GM12878 (cell line): ENCODE measurements at regions of chr10 and their contacts with region 1.

Region 1: GRCh38 chr10:110076559-110077318 is 69.0 kb downstream of the ADD3 start:
- DNase-seq: peak; percentile 76
- ATAC-seq: peak; percentile 83
- H3K4me3 ChIP-seq: peak overlapping the region; percentile 43
- H3K27ac ChIP-seq: peak overlapping the region; percentile 87
- H3K4me1 ChIP-seq: peaks cover 34% of the 10 kb centered on the region
- H3K27me3 ChIP-seq: no peaks in the 10 kb centered on the region
- CTCF ChIP-seq: no peak
- EP300 ChIP-seq: peak; percentile 26 to 46; a peak in 1 of 4 replicates
- POLR2A ChIP-seq: no peak
- RAD21 ChIP-seq: peak; percentile 11; the same call in 1 of the 2 replicates

Region 2: DNA sequence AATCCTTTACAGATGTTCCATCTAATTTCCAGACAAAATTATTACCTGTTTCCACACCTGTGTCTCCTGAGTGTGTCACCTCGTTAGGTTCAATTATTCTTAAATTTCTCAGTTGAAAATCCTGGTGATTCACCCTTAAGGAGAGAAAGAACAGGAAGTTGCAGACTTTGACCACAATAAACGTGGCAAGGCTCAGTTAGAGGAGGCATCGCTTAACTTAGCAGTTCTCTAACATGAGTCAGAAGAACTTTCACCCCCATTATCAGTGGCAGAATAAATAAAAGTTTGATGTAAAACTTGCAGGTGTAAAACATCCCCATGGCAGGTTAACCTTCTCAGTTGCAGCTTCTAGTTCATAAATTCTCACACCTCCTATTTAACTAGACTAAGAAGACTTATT is 161.8 kb before region 1 on chr10:
- CTCF ChIA-PET with region 1: interaction called, 3 read pairs
- POLR2A ChIA-PET with region 1: no interaction called
- RAD21 ChIA-PET with region 1: no interaction called
- SMC1A ChIA-PET with region 1: interaction called, 3 read pairs
- in situ Hi-C with region 1: no loop called
- intact Hi-C with region 1: loop called (anchors 5 kb)
- DNase-seq: peak; percentile 41
- ATAC-seq: peak; percentile 18; the same call in 2 of the 3 replicates
- H3K4me3 ChIP-seq: no peak overlapping the region
- H3K27ac ChIP-seq: peak overlapping the region; percentile 25; the same call in 1 of the 2 replicates
- H3K4me1 ChIP-seq: peaks cover 61% of the 10 kb centered on the region
- H3K27me3 ChIP-seq: no peaks in the 10 kb centered on the region
- CTCF ChIP-seq: no peak
- EP300 ChIP-seq: no peak
- POLR2A ChIP-seq: no peak
- RAD21 ChIP-seq: no peak

Region 3: DNA sequence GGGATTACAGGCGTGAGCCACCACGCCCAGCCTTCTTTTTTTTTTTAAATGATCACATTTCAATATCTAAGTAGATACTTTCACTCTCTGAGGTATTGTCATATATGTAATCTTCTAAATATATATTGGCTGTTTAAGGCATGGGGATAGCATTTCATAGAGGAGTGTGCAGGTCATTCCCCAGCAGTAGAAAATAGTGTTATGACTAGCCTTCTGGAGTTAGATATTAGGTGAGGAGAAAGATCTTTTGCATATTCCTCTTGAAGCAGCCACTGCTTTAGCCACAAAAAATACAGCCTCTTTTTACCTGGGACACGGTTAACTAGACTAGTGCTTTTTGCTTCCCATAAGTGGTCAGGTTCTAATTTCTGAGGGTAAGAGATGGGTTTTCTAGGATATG is 40.1 kb before region 1 on chr10:
- CTCF ChIA-PET with region 1: interaction called, 13 read pairs
- POLR2A ChIA-PET with region 1: interaction called, 3 read pairs
- RAD21 ChIA-PET with region 1: interaction called, 6 read pairs
- SMC1A ChIA-PET with region 1: interaction called, 12 read pairs
- in situ Hi-C with region 1: no loop called
- intact Hi-C with region 1: no loop called
- DNase-seq: peak; percentile 48
- ATAC-seq: peak; percentile 78
- H3K4me3 ChIP-seq: peak overlapping the region; percentile 20
- H3K27ac ChIP-seq: peak overlapping the region; percentile 42; the same call in 1 of the 2 replicates
- H3K4me1 ChIP-seq: peaks cover 16% of the 10 kb centered on the region
- H3K27me3 ChIP-seq: no peaks in the 10 kb centered on the region
- CTCF ChIP-seq: no peak
- EP300 ChIP-seq: 0 out of 4 replicates have a peak, but pooled peaks of 1 of the 2 experiments have one; percentile 17
- POLR2A ChIP-seq: no peak
- RAD21 ChIP-seq: no peak

Region 4: DNA sequence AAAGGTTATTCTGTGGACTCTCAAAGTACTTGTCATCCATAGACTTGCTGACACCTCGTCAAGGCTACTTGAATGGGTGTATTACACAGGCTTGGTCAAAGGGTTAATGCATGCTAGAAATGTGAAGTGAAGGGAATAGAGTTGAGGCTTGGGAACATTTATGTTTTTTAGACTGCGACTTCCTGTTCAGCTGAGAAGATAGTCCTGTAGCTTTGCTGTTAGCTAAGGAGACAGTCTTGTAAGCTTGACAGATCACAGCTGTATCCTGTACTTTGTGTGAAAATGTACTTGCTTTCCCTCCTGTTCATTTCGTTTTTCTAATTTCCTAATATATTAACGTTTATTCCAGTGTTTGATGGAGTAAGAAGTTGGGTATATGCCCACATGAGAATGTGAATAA is 16.8 kb before region 1 on chr10:
- CTCF ChIA-PET with region 1: interaction called, 5 read pairs
- POLR2A ChIA-PET with region 1: interaction called, 7 read pairs
- RAD21 ChIA-PET with region 1: interaction called, 5 read pairs
- SMC1A ChIA-PET with region 1: interaction called, 67 read pairs
- in situ Hi-C with region 1: no loop called
- intact Hi-C with region 1: no loop called
- DNase-seq: no peak
- ATAC-seq: peak; percentile 31; the same call in 1 of the 3 replicates
- H3K4me3 ChIP-seq: no peak overlapping the region
- H3K27ac ChIP-seq: no peak overlapping the region; the same call in 1 of the 2 replicates
- H3K4me1 ChIP-seq: peaks cover 24% of the 10 kb centered on the region
- H3K27me3 ChIP-seq: no peaks in the 10 kb centered on the region
- CTCF ChIP-seq: no peak
- EP300 ChIP-seq: no peak
- POLR2A ChIP-seq: no peak
- RAD21 ChIP-seq: no peak

Region 5: DNA sequence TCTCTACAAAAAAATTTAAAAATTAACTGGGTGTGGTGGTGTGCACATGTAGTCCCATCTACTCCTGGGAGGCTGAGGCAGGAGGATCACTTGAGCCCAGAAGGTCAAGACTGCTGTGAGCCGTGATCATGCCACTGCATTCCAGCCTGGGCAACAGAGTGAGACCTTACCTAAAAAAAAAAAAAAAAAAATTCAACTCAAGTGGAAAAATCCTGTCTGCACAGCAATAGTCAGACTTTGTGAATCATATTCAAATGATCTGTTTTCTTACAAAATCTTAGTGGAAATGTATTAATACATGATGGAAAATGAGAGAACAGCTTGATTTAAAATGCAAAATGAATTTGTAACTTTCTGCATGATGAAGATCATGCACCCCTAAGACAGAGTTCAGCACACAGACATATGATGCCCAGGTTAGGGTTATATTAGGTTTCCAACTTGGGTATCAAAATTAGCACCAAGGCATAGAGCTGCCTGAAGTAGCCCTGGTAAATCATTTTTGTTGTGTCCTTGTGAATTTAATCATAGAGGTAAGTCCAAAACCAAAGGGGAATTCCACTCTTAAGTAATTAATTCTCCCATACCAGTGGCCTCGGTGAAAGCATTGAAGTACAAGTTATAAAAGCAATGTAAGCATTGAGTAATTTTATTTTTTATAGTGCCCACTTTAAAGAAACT is 24.9 kb after region 1 on chr10:
- CTCF ChIA-PET with region 1: interaction called, 3 read pairs
- POLR2A ChIA-PET with region 1: no interaction called
- RAD21 ChIA-PET with region 1: interaction called, 3 read pairs
- SMC1A ChIA-PET with region 1: interaction called, 11 read pairs
- in situ Hi-C with region 1: no loop called
- intact Hi-C with region 1: no loop called
- DNase-seq: no peak
- ATAC-seq: peak; percentile 82
- H3K4me3 ChIP-seq: no peak overlapping the region
- H3K27ac ChIP-seq: no peak overlapping the region
- H3K4me1 ChIP-seq: peaks cover 3% of the 10 kb centered on the region
- H3K27me3 ChIP-seq: no peaks in the 10 kb centered on the region
- CTCF ChIP-seq: no peak
- EP300 ChIP-seq: no peak
- POLR2A ChIP-seq: no peak
- RAD21 ChIP-seq: no peak

Region 6: DNA sequence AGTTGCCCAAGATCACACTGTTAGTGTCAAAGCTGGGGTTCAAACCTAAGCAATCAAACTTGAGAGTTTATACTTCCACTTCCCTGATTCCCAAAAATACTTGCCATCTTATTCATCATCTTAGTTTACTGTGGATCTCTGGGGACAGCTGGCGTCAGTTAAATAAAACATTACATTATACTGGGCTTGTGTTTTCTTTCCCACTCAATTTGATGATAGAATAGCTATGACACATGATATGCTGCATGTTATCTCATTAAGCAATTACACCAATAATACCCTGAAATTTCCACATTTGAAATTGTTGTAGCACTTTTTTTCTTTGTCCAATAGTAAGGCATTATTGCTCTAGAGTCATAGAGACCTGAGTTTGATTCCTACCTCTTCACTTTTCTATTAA is 67.8 kb after region 1 on chr10:
- CTCF ChIA-PET with region 1: no interaction called
- POLR2A ChIA-PET with region 1: no interaction called
- RAD21 ChIA-PET with region 1: no interaction called
- SMC1A ChIA-PET with region 1: no interaction called
- in situ Hi-C with region 1: no loop called
- intact Hi-C with region 1: no loop called
- DNase-seq: no peak
- ATAC-seq: no peak
- H3K4me3 ChIP-seq: no peak overlapping the region
- H3K27ac ChIP-seq: no peak overlapping the region
- H3K4me1 ChIP-seq: no peaks in the 10 kb centered on the region
- H3K27me3 ChIP-seq: peaks cover 0 to 1% of the 10 kb centered on the region in 2 experiments; a peak in 3 of 4 replicates
- CTCF ChIP-seq: no peak
- EP300 ChIP-seq: no peak
- POLR2A ChIP-seq: no peak
- RAD21 ChIP-seq: no peak

Region 7: GRCh38 chr10:110802551-110803238 is 726.0 kb after region 1 on chr10:
- CTCF ChIA-PET with region 1: no interaction called
- POLR2A ChIA-PET with region 1: no interaction called
- RAD21 ChIA-PET with region 1: no interaction called
- SMC1A ChIA-PET with region 1: no interaction called
- in situ Hi-C with region 1: no loop called
- intact Hi-C with region 1: no loop called
- DNase-seq: peak; percentile 85
- ATAC-seq: peak; percentile 73
- H3K4me3 ChIP-seq: no peak overlapping the region
- H3K27ac ChIP-seq: peak overlapping the region; percentile 91
- H3K4me1 ChIP-seq: peaks cover 33% of the 10 kb centered on the region
- H3K27me3 ChIP-seq: no peaks in the 10 kb centered on the region
- CTCF ChIP-seq: no peak
- EP300 ChIP-seq: peak; percentile 19 to 52; a peak in 2 of 4 replicates
- POLR2A ChIP-seq: peak; percentile 47; the same call in 1 of the 2 replicates
- RAD21 ChIP-seq: no peak